AG04449 (cell line): ENCODE measurements at regions of chr12 and their contacts with region 1.

Region 1: DNA sequence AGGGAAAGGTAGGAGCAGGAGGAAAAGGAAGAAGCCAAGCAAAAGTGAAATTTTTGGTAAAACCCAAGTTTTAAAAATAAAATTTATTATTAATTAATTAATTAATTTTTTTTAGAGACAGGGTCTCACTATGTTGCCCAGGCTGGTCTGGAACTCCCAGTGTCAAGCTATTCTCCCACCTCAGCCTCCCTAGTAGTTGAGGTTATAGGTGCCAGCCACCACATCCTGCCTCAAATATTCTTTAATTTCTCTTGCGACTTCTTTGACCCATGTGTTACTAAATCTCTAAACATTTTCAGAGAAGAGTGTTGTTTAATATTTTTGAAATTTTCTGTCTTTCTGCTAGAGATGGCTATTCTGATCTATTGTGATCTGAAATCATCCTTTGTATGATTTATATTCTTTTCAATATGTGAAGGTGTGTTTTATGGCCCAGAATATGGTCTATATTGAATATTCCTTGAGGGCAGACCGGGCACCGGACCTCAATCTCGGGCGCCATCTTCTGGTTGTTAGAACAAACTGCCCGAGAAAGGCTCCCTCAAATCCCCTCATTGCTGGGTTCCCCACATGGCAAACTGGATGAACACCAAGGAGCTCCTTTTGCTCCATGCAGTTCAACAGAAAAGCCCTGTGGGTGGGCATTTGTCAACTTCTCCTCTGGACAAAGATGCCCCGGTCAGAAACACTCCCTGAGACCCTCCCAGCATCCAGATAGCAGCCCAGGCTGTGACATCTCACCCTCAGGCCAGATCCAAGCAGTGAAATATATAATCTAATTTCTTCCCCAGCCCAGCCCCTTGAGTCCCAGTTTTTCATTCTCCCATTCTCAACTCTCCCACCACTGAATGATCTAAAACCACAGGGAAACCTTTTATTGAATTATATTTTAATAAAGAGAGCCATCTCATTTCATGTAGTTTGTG is 110.5 kb downstream of the ASCL4 start:
- DNase-seq: peak; percentile 7
- H3K4me3 ChIP-seq: no peak overlapping the region
- CTCF ChIP-seq: peak; percentile 69

Region 2: DNA sequence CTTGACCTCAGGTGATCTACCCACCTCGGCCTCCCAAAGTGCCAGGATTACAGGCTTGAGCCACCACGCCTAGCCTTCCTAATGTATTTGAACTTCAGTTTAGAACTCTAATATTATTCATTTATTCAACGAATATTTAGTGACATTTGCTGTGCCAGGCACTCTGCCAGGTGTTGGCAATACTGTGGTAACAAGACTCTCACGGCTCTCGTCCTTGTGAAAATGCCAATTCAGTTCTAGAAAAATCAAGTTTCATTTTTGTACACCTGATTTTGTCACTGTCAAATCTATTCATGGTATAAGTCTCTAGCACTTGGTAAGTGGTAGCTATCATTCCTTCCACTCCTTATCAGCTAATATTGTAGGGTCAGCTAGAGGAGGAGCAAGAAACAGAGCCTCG is 205.7 kb before region 1 on chr12:
- CTCF ChIA-PET with region 1: interaction called, 155 read pairs
- POLR2A ChIA-PET with region 1: no interaction called
- DNase-seq: no peak
- H3K4me3 ChIP-seq: no peak overlapping the region
- CTCF ChIP-seq: no peak

Region 3: GRCh38 chr12:107685360-107686248 is 199.4 kb before region 1 on chr12 and contains the start of gene PWP1:
- CTCF ChIA-PET with region 1: interaction called, 155 read pairs
- POLR2A ChIA-PET with region 1: no interaction called
- DNase-seq: peak; percentile 63
- H3K4me3 ChIP-seq: peak within 1 kb of the TSS; percentile 100
- CTCF ChIP-seq: no peak

Region 4: GRCh38 chr12:107938446-107938845 is 53.4 kb after region 1 on chr12:
- CTCF ChIA-PET with region 1: no interaction called
- POLR2A ChIA-PET with region 1: no interaction called
- DNase-seq: no peak
- H3K4me3 ChIP-seq: no peak overlapping the region
- CTCF ChIP-seq: no peak

Region 5: GRCh38 chr12:108090107-108090899 is 205.3 kb after region 1 on chr12:
- CTCF ChIA-PET with region 1: no interaction called
- POLR2A ChIA-PET with region 1: no interaction called
- DNase-seq: no peak
- H3K4me3 ChIP-seq: no peak overlapping the region
- CTCF ChIP-seq: no peak